ENCODE measurements at regions of chr1 and their contacts with region 1.

Region 1: DNA sequence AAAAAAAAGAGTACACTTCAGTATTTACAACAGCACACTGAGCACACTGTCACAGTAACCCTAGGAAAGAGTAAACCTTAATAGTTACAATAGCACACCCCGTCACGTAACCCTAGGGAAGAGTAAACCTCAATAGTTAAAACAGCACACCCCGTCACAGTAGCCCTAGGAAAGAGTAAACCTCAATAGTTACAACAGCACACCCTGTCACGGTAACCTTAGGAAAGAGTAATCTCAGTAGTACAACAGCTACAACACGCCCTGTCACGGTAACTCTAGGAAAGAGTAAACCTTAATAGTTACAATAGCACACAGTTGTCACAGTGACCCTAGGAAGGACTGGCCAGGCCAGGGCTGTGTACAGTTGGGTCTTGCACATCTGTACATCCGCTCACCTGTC is 3.0 kb downstream of the CDK11A start:
- DNase-seq: no peak
- H3K4me3 Mint-ChIP-seq: peak overlapping the region; percentile 10
- H3K27ac Mint-ChIP-seq: no peak overlapping the region
- H3K4me1 Mint-ChIP-seq: peaks cover 5% of the 10 kb centered on the region
- H3K27me3 Mint-ChIP-seq: no peaks in the 10 kb centered on the region

Region 2: DNA sequence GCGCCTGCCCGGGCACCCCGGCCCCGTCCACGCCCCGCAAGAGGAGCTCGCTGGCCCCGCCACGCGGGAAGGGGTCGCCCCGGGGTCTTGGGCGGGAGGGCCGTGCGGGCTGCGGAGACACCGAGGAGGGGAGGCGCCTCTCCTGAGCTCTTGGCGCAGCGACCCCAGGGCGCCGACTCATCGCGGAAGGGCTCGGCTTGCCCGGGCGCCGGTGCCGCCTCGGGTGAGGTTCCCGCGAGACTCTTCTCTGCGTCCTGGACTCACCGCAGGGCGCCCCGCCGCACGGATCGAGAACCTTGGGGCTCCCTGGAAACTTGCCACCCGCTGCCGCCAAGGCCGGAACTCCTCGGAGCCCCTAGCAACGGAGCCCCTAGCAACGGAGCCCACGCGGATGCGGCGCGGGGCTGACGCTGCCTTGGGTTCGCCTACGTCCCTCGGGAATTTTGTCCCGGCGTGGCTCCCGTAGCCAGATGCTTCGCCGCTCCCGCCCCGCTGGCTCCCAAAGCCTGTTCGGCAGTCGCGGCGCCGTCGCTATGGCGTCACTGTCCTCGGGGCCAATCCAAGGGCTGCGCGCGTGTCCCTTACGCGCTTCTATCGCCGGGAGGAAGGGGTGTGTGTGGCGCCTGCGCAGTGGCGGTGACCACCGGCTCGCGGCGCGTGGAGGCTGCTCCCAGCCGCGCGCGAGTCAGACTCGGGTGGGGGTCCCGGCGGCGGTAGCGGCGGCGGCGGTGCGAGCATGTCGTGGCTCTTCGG is 209.5 kb before region 1 on chr1 and contains the start of gene ATAD3A:
- intact Hi-C with region 1: loop called (anchors 2 kb)
- DNase-seq: peak; percentile 95
- H3K4me3 Mint-ChIP-seq: peak within 1 kb of the TSS; percentile 97
- H3K27ac Mint-ChIP-seq: peak within 1 kb of the TSS; percentile 92
- H3K4me1 Mint-ChIP-seq: peaks cover 7% of the 10 kb centered on the region
- H3K27me3 Mint-ChIP-seq: no peaks in the 10 kb centered on the region
- total RNA-seq, gene ATAD3A: 108 TPM in 2 replicates

Region 3: GRCh38 chr1:3222042-3222692 is 1501.0 kb after region 1 on chr1:
- intact Hi-C with region 1: no loop called
- DNase-seq: no peak
- H3K4me3 Mint-ChIP-seq: no peak overlapping the region
- H3K27ac Mint-ChIP-seq: no peak overlapping the region
- H3K4me1 Mint-ChIP-seq: no peaks in the 10 kb centered on the region
- H3K27me3 Mint-ChIP-seq: no peaks in the 10 kb centered on the region

Measured in activated T-helper 1 cell treated with anti-CD3 and anti-CD28 coated beads, Interleukin-12 subunit alpha, Interleukin-12 subunit beta, Interleukin-2, Interleukin-4 antibody, amounts not matched to agents 30 ng/mL and 10 ng/mL and 1 ng/mL, durations not matched to agents 14 hours and 24 hours and 36 hours (primary cell).